Dorsolateral prefrontal cortex (tissue), 120 donors: ENCODE measurements at regions of chr17 and their contacts with region 1.

Region 1: DNA sequence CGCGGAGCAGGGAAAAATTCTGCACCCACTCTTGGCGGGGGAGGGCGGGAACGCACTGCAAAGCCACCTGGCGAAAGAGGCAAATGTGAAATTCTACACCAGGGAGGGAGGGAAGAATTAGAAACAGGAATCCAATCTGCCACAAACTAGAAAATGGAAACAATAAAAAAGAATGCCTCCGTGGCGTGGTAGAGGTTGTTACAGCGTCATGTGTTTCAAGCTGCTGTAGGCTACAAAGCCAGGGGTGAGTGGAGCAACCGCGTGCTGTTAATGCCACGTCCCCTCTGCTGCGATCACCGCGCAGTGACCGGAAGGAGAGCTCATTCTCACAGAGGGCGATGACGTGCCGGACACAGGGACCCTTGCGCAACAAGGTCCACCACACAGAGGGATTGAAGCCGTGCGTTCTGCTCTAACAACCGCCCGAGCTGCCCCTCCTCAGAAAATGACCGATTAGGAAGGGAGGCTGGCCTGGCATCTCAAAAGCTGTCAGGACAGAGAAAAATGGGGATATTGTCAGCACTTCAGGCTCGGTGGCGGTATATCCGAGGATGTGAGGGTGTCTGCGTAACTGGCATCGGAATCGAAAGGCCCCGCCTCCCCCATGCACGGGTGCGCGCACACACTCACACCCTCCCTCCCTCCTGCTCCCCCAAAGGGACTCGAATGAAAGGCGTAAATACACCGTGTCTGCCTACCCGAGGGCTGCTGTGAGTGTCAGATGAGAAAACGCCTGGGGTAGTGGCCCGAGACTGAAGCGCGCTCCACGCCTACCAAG is 70.8 kb upstream of the TNRC6C start:
- DNase-seq: peak in 9 of 10 donors; percentile 53 to 77 (median 67)
- H3K4me3 ChIP-seq: peak overlapping the region; percentile 36 to 89 (median 68)
- H3K27ac ChIP-seq: peak overlapping the region; percentile 12 to 93 (median 85)
- H3K27me3 ChIP-seq: no peaks in the 10 kb centered on the region
- CTCF ChIP-seq: peak in 6 of 56 donors; percentile 8 to 30 (median 18)

Region 2: GRCh38 chr17:77924757-77925336 is 37.2 kb after region 1 on chr17:
- intact Hi-C with region 1: loop called in 1 of 2 experiments (anchors 5 kb)
- DNase-seq: peak in 8 of 10 donors; percentile 35 to 78 (median 63)
- H3K4me3 ChIP-seq: peak overlapping the region in 1 of 59 donors; percentile 12
- H3K27ac ChIP-seq: peak overlapping the region in 55 of 59 donors; percentile 1 to 91 (median 70)
- H3K27me3 ChIP-seq: no peaks in the 10 kb centered on the region
- CTCF ChIP-seq: peak in 1 of 56 donors; percentile 9

Region 3: DNA sequence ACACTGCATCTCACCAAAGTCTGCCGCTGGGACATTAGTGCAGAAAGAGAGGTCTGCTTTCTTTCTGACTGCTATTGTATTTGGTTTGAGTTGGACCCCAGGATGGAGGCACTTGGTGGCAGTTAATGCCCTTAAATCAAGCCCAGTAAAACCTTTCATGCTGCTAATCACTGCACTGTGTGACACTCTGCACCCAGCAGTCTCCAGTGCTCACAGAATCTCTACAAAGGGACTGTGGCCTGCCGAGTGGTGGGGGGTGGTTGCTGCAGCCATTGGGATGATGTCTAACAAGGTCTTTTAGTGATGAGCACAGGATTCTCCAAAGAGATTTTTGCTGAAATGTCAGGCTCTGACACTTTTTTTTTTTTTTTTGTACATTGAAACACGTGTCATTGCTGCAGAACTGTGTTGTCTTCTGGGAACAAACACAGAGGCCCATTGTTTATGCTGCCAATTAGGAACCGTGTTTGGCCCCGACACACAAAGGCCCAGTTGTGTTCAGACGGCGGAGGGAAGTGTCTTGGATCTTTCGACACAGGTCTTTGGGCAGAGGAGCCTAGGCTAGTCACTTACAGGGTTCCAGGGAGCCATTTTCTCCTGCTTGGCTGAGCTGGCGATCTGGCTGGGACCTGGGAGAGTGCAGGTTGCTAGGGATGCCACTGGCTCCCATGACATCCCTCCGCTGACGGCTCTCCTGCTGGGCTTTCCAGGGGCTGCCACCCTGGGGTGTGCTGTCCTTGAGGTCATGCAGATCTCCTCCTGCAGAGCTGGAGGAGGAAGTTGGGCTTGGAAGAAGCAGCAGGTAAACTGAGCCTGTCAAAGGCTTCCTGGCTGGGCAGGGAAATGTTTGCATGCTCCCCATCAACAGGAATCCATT is 54.7 kb after region 1 on chr17:
- intact Hi-C with region 1: loop called in 1 of 2 experiments (anchors 5 kb)
- DNase-seq: peak; percentile 18 to 91 (median 82)
- H3K4me3 ChIP-seq: peak overlapping the region in 40 of 59 donors; percentile 2 to 59 (median 29)
- H3K27ac ChIP-seq: peak overlapping the region; percentile 79 to 100 (median 98)
- H3K27me3 ChIP-seq: peaks cover 0 to 3% (median 0%) of the 10 kb centered on the region in 45 donors
- CTCF ChIP-seq: peak in 5 of 56 donors; percentile 6 to 38 (median 17)

Region 4: DNA sequence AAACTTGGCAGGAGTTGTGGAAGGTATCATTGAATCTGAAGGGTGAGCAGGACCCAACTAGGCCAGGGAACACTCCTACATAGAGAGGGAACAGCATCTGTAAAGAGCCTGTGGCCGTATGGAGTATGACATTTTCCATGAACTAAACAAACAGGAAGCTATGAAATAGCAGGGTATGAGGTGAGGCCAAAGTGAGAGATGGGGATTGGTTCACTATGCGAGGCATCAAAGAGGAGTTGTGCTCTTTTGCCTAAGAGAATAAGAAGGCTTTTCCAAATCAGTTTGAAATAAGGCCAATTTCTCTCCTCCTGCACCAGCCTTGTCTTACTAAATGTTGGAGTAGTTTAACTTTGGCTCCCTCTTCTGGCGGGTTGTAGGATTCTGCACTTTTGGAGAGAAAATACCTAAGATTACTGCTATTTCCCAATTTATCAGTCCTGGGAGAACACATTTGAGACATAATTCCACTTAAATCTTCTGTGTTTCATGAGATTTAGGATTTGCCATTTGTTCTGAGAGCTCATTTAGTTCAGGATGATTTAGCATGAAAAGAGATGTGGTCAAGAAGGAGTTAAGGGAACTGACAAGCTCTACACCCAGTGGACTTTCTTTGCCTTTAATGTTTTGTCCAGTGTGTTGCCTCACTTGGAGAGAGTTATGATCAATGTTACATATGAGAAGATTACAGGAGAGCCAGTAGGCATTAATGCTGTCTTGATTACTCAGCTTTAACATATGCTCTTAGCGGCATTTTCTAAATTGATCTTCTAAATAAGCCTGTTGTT is 126.2 kb after region 1 on chr17:
- intact Hi-C with region 1: loop called in 1 of 2 experiments (anchors 5 kb)
- DNase-seq: peak in 4 of 10 donors; percentile 41 to 76 (median 58)
- H3K4me3 ChIP-seq: no peak overlapping the region
- H3K27ac ChIP-seq: peak overlapping the region in 44 of 59 donors; percentile 2 to 77 (median 42)
- H3K27me3 ChIP-seq: no peaks in the 10 kb centered on the region
- CTCF ChIP-seq: peak; percentile 58 to 98 (median 87)

Region 5: DNA sequence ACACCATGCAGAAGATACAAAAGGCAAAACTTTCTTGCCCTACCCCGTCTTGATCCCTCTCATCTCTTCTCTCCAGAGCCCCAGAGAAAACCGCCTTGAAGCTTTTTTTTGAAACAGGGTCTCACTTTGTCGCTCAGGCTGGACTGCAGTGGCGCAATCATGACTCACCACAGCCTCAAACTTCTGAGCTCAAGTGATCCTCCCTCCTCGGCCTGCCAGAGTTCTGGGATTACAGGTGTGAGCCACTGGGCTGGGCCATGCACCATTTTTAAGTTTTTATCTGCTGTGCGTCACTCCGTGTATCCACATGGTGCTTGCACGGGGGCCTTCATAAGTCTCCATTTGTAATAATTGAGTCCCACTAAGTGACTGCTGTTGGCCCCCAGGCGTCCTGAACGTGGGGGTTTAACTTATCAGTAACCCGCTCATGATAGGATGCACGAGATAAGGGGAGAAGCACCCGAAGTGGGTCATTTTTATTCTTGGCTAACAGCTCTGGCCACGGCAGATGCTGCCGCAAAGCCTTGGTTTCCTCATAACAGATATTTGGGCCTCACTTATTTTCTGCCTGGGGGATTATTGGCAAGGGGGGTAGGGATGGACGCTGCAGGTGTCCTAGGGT is 681.0 kb after region 1 on chr17:
- intact Hi-C with region 1: no loop called
- DNase-seq: no peak
- H3K4me3 ChIP-seq: no peak overlapping the region
- H3K27ac ChIP-seq: no peak overlapping the region
- H3K27me3 ChIP-seq: peaks cover 0 to 4% (median 0%) of the 10 kb centered on the region in 45 donors
- CTCF ChIP-seq: no peak